PC-3 (cell line): ENCODE measurements at regions of chr19 and their contacts with region 1.

Region 1: DNA sequence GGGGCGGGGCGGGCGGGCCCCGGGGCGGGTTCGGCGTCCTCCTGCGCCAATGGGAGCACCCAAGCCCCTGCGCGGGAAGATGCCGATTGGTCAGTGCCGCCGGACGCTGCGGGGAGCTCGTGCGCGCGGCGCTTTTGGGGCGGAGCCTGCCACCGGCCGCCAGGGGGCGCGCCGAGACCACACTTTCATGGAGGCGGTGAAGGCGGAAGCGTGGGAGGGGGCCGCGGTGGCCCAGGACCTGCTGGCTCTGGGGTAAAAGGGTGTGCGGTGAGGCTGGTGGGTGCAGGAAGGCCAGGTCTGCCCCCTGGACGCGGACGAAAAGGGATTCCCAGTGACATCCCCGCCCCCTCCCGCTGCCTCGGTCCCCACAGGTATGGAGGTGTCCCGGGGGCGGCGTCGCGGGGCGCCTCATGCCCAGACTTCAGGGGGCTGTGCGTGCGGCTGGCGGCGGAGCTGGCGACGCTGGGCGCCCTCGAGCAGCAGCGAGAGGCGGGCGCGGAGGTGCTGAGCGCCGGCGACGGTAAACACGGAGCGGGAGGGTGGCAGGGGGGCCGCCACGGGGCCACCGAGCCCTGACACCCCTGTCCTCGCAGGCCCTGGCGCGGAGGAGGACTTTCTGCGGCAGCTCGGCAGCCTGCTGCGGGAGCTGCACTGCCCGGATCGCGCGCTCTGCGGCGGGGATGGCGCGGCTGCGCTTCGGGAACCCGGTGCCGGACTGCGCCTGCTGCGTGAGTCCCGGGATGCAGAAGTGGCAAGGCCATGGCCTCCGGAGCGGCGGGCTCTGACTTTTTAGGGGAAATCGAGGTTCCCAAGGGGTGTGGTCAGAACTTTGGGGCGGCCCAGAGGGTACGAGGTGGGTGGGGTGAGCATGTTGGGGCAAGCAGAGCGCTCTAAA is at the start of gene FAM98C:
- DNase-seq: peak; percentile 94
- ATAC-seq: peak; percentile 94
- H3K4me3 ChIP-seq: peak within 1 kb of the TSS; percentile 94
- H3K27ac ChIP-seq: no peak within 1 kb of the TSS
- H3K4me1 ChIP-seq: peaks cover 8% of the 10 kb centered on the region; the same call in 1 of the 2 replicates
- H3K27me3 ChIP-seq: no peaks in the 10 kb centered on the region
- CTCF ChIP-seq: peak; percentile 74
- total RNA-seq, gene FAM98C: 23.5 and 53.6 TPM in 2 replicates

Region 2: DNA sequence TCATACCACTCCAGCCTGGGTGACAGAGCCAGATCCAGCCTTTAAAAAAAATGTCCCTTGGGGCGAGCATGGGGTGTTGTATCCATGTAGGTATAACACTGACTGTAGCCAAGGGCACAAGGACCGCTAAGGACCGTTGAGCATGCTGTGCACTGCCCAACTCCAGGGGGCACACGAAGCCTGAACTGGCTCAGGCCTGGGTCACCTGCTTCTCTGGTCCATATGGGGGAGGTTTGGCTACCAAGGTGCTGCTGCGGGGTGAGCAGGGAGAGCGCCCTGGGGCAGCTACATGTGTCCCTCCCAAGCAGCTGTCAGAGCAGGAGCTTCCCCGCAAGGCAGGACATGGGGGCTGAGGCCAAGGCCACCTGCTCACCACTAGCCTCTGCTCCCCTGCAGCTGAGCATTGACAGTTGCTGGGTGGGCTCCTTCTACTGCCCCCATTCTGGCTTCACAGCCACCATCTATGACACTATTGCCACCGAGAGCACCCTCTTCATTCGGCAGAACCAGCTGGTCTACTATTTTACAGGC is 51.3 kb before region 1 on chr19:
- CTCF ChIA-PET with region 1: no interaction called
- POLR2A ChIA-PET with region 1: no interaction called
- intact Hi-C with region 1: no loop called
- DNase-seq: no peak
- ATAC-seq: no peak; the same call in 1 of the 2 replicates
- H3K4me3 ChIP-seq: no peak overlapping the region
- H3K27ac ChIP-seq: no peak overlapping the region
- H3K4me1 ChIP-seq: no peaks in the 10 kb centered on the region
- H3K27me3 ChIP-seq: no peaks in the 10 kb centered on the region
- CTCF ChIP-seq: no peak

Region 3: DNA sequence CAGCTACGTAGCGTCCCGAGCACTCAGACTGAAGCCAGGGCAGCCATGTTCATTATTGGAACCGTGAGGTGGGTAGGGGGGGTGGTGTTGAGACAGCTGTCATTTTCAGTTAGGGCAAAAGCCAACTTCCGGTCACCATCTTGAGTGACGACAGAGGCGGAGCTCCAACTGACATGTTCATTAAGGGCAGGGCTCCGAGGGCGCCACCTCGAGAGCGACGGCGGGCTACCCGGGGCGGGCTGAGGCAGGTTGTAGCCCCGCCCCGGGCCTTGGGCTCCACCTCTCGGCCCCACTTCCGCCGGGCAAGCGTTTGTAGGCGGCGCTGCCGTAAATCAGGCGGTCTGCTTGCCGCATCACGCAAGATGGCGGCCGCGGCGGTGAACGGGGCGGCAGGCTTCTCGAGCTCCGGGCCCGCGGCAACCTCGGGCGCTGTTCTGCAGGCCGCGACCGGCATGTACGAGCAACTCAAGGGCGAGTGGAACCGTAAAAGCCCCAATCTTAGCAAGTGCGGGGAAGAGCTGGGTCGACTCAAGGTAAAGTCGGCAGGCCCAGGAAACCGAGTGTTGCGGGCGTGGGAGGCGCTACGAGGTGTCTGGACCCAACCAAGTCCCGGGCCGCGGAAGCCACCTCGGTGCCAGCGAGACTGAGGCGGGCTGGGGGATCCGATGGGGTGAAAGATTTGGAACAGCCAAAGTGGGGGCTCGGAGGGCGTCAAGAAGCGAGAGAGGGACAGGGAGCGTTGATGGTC is 28.6 kb before region 1 on chr19 and contains the start of gene PSMD8:
- CTCF ChIA-PET with region 1: no interaction called
- POLR2A ChIA-PET with region 1: interaction called, 11 read pairs
- intact Hi-C with region 1: no loop called
- DNase-seq: peak; percentile 96
- ATAC-seq: peak; percentile 97
- H3K4me3 ChIP-seq: peak within 1 kb of the TSS; percentile 84
- H3K27ac ChIP-seq: peak within 1 kb of the TSS; percentile 64
- H3K4me1 ChIP-seq: peaks cover 15% of the 10 kb centered on the region
- H3K27me3 ChIP-seq: no peaks in the 10 kb centered on the region
- CTCF ChIP-seq: peak; percentile 27; the same call in 1 of the 2 replicates
- total RNA-seq, gene PSMD8: 290 and 367 TPM in 2 replicates

Region 4: GRCh38 chr19:38387550-38388348 is 15.5 kb before region 1 on chr19 and contains the start of gene GGN:
- CTCF ChIA-PET with region 1: interaction called, 26 read pairs
- POLR2A ChIA-PET with region 1: interaction called, 10 read pairs
- intact Hi-C with region 1: no loop called
- DNase-seq: peak; percentile 87
- ATAC-seq: peak; percentile 70
- H3K4me3 ChIP-seq: peak within 1 kb of the TSS; percentile 85
- H3K27ac ChIP-seq: peak within 1 kb of the TSS; percentile 56
- H3K4me1 ChIP-seq: peaks cover 7% of the 10 kb centered on the region; the same call in 1 of the 2 replicates
- H3K27me3 ChIP-seq: no peaks in the 10 kb centered on the region
- CTCF ChIP-seq: no peak
- total RNA-seq, gene GGN: 0.29 and 0.73 TPM in 2 replicates

Region 5: GRCh38 chr19:38506723-38507550 is 103.7 kb after region 1 on chr19:
- CTCF ChIA-PET with region 1: interaction called, 13 read pairs
- POLR2A ChIA-PET with region 1: interaction called, 4 read pairs
- intact Hi-C with region 1: no loop called
- DNase-seq: peak; percentile 89
- ATAC-seq: peak; percentile 89
- H3K4me3 ChIP-seq: no peak overlapping the region
- H3K27ac ChIP-seq: no peak overlapping the region
- H3K4me1 ChIP-seq: no peaks in the 10 kb centered on the region
- H3K27me3 ChIP-seq: no peaks in the 10 kb centered on the region
- CTCF ChIP-seq: no peak

Region 6: DNA sequence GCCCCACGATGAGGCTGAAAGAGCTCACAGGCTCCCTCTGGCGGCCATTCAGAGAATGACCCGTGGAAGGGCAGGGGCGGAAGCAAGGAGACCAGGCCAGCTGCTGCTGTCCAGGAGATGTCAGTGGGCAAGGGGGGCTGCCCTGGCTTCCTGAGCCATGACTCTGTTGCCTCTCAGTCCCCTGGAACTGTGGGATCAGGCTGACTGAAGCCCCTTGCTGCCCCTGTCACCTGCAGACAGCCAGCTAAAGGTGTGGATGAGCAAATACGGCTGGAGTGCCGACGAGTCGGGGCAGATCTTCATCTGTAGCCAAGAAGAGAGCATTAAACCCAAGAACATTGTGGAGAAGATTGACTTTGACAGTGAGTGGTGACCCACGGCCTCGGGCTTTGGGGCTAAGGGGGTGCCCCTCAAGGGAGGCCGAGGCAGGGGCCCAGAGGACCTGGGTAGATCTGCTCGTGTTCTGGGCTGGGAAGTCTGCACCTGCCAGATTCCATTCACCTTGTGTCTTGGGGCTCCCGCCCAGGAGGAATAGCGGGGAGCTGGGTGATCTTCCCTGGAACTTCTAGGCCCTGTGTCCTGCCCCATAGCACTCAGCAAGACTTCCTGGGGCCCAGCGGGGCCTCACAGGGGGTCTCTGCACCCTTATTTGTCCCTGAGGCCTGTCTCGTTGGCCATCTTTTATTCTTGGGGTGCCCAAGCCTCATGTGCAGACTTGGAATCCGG is 231.7 kb after region 1 on chr19:
- CTCF ChIA-PET with region 1: interaction called, 13 read pairs
- POLR2A ChIA-PET with region 1: no interaction called
- intact Hi-C with region 1: loop called (anchors 1 kb)
- DNase-seq: peak; percentile 73
- ATAC-seq: peak; percentile 27; the same call in 1 of the 2 replicates
- H3K4me3 ChIP-seq: no peak overlapping the region
- H3K27ac ChIP-seq: no peak overlapping the region
- H3K4me1 ChIP-seq: peaks cover 25% of the 10 kb centered on the region
- H3K27me3 ChIP-seq: no peaks in the 10 kb centered on the region
- CTCF ChIP-seq: peak; percentile 78

Region 7: DNA sequence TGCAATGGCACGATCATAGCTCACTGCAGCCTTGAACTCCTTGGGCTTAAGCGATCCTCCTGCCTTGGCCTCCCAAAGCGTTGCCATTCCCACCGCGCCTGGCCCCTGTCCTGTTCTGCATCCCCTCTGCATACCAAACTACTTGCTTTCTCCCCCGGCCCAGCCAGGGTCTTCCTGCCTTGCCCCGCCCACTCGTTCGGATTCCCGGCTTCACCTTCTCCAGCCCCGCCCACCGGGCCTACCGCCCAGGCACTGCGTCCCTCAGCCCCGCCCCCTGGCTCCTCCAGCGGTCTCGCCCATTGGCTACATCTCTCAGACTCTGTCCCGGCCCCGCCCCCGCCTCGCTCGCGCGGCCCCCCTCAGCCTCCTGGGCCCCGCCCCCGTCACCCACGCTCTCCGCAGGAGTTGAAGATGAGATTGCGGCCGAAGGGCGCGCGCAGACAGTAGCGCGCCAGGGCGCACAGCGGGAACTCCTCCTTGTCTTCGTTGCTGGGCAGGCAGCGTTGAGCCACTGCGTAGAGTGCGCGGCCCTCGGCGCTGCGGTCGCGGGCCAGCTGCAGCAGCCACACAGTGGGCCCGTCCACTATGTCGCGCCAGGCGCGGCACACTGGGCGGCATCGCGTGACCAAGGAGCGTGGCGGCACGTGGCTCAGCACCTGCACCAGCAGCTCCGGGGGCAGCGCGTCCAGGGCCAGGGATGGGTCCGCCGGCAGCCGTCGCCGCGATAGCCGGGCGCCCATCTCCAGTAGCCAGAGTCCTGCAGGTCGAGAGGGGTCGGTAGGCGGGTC is 546.6 kb after region 1 on chr19:
- CTCF ChIA-PET with region 1: no interaction called
- POLR2A ChIA-PET with region 1: no interaction called
- intact Hi-C with region 1: loop called (anchors 10 kb)
- DNase-seq: peak; percentile 20
- ATAC-seq: no peak
- H3K4me3 ChIP-seq: no peak overlapping the region
- H3K27ac ChIP-seq: no peak overlapping the region
- H3K4me1 ChIP-seq: no peaks in the 10 kb centered on the region
- H3K27me3 ChIP-seq: no peaks in the 10 kb centered on the region
- CTCF ChIP-seq: no peak